Calu3 (cell line): ENCODE measurements at regions of chr2 and their contacts with region 1.

Region 1: DNA sequence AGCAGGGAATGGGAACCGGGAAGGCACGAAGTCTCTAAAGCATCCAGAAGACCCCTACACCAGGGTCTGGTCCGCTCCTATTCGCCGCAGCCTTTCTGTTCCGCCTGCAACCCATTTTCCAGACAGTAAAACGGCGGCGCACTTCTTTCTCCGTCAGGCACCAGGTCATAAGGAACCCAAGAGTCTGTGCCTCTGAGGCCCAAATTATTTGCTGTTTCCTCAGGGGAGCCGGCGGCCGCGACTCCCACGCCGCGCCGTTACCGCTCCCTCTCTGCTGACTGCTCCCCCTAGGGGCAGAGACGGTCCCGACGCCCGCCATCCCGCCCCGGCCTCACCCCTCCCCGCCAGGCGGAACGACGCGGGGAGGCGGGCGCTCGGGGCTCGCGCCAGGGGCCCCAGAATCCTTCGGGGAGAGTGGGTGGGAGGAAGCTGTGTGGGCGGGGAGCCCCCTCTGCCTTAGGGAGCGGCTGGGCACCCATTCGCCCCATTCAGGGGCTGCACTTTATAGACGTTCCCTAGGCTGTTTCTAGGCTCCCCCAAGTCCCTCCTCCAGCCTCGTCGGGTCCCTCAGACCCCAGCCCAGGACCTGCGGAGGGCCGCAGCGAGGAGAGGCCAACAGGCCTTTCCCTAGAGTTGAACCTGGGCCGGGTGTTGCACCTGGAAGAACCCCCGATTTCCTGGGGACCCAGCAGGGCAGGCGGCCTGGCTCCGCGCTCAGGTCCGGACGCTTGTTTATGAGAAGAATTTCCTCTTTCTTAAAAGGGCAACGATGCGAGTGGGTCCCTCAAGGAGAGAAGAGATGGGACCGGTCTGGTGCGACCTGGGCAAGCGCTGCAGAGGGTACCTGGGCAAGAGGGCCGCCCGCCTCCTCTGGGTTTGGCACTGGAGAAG is 3.6 kb upstream of the CTDSP1 start:
- DNase-seq: peak; percentile 96
- H3K4me3 Mint-ChIP-seq: peak overlapping the region; percentile 98
- H3K27ac Mint-ChIP-seq: peak overlapping the region; percentile 78
- H3K4me1 Mint-ChIP-seq: peaks cover 26% of the 10 kb centered on the region
- H3K27me3 Mint-ChIP-seq: no peaks in the 10 kb centered on the region
- CTCF ChIP-seq: peak; percentile 97

Region 2: GRCh38 chr2:218286570-218287459 is 109.2 kb before region 1 on chr2:
- CTCF ChIA-PET with region 1: interaction called, 12 read pairs
- intact Hi-C with region 1: no loop called
- DNase-seq: peak; percentile 94
- H3K4me3 Mint-ChIP-seq: peak overlapping the region; percentile 61
- H3K27ac Mint-ChIP-seq: peak overlapping the region; percentile 96
- H3K4me1 Mint-ChIP-seq: peaks cover 92% of the 10 kb centered on the region
- H3K27me3 Mint-ChIP-seq: no peaks in the 10 kb centered on the region
- CTCF ChIP-seq: no peak

Region 3: GRCh38 chr2:218547978-218548377 is 151.9 kb after region 1 on chr2:
- CTCF ChIA-PET with region 1: no interaction called
- intact Hi-C with region 1: no loop called
- DNase-seq: no peak
- H3K4me3 Mint-ChIP-seq: no peak overlapping the region
- H3K27ac Mint-ChIP-seq: no peak overlapping the region
- H3K4me1 Mint-ChIP-seq: no peaks in the 10 kb centered on the region
- H3K27me3 Mint-ChIP-seq: no peaks in the 10 kb centered on the region
- CTCF ChIP-seq: no peak

Region 4: GRCh38 chr2:218659988-218660358 is 263.9 kb after region 1 on chr2:
- CTCF ChIA-PET with region 1: no interaction called
- intact Hi-C with region 1: no loop called
- DNase-seq: no peak
- H3K4me3 Mint-ChIP-seq: peak overlapping the region; percentile 99
- H3K27ac Mint-ChIP-seq: peak overlapping the region; percentile 87
- H3K4me1 Mint-ChIP-seq: peaks cover 22% of the 10 kb centered on the region
- H3K27me3 Mint-ChIP-seq: no peaks in the 10 kb centered on the region
- CTCF ChIP-seq: no peak

Region 5: GRCh38 chr2:218679119-218679518 is 283.1 kb after region 1 on chr2:
- CTCF ChIA-PET with region 1: no interaction called
- intact Hi-C with region 1: no loop called
- DNase-seq: no peak
- H3K4me3 Mint-ChIP-seq: no peak overlapping the region
- H3K27ac Mint-ChIP-seq: no peak overlapping the region
- H3K4me1 Mint-ChIP-seq: no peaks in the 10 kb centered on the region
- H3K27me3 Mint-ChIP-seq: no peaks in the 10 kb centered on the region
- CTCF ChIP-seq: no peak